ENCODE measurements at regions of chr19 and their contacts with region 1.

Region 1: DNA sequence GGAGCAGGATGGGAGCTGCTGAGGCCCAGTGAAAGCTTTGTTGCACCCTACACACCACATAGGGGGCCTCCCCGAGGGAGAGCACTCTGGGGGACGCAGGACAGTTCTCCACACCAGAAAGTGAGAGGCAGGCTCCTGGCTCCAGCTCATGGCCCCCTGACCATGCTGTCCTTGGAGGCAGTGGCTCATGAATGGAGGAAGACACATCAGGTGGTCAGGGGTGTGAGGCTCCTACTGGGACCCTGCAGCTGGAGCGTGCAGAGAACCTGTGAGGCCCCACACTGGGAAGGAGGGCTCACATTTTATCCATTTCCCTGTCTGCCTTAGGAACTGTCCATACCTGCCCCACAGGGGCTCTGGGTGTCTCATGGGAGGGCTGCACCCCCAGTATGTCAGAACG is 85.3 kb downstream of the ZNF536 start:
- DNase-seq: no peak

Region 2: DNA sequence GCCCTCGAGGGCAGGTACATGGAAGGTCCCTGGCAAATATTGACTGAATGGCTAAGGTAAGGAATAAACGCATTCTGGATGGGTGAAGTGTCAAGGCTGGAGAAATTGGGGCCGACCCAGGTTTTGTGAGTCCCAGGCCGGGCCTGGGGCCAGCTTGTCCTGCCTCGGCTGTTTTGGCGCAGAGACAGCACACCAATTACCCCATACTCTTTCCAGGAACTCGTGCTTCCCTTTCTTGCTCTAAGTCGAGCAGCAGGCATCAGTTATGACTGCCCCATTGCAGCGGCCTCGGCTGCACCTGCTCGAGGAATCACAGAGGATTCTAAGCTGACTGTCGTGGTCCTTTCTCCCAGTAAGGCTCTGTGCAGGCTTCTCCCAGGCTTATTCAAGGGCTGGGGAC is 18.2 kb before region 1 on chr19:
- intact Hi-C with region 1: loop called in 1 of 2 experiments (anchors 1 kb)
- DNase-seq: no peak

Measured in posterior vena cava (tissue), 2 donors.